Activated CD4-positive, alpha-beta memory T cell treated with anti-CD3 and anti-CD28 coated beads, Interleukin-2, amount 10 ng/mL, durations not matched to agents 7 days and 5 days (primary cell): ENCODE measurements at regions of chr12 and their contacts with region 1.

Region 1: DNA sequence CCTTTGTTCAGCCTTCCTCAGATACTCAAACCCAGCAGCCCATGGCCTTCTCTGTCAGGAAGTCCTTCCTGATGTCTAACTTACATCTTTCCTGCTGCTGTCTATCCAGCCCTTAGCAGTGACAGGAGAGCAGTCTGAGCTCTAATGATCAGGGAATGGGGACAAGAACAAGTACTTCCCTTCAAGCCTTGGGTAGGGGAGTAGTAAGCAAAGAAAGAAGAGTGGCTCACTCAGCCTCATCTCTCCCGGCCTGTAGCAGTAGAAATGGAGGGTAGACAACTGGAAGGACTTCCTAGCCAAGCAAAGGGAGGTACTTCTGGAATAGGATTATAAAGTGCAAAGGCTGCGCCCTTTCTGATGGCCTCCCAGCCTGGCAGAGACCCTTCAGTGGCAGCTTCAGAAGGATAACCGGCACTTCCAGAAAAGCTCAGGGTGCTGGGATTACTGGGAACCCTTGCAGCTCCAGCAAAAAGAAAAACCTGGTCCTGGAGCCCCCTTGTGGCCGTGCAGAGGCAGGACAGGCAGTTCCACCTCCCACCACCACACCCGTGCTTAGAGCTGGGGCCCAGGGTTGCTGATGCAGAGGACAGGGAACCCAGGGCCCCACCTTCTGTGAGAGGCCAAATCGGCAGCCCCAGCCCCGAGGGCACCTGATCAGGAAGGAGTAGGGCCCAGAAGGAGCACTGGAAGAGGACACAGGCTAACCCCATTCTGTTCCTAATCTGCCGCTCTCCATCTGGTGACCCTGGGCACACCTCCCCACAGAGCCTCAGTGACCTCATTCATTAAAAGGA is 12.4 kb upstream of the SMUG1 start:
- DNase-seq: peak; percentile 69
- H3K4me3 Mint-ChIP-seq: no peak overlapping the region
- H3K27ac Mint-ChIP-seq: no peak overlapping the region
- H3K4me1 Mint-ChIP-seq: peaks cover 4% of the 10 kb centered on the region
- H3K27me3 Mint-ChIP-seq: peaks cover 55% of the 10 kb centered on the region

Region 2: GRCh38 chr12:53984901-53985709 is 216.1 kb before region 1 on chr12 and contains the start of gene HOXC10:
- CTCF ChIA-PET with region 1: interaction called, 14 read pairs
- POLR2A ChIA-PET with region 1: no interaction called
- DNase-seq: peak; percentile 88
- H3K4me3 Mint-ChIP-seq: peak within 1 kb of the TSS; percentile 48
- H3K27ac Mint-ChIP-seq: peak within 1 kb of the TSS; percentile 47
- H3K4me1 Mint-ChIP-seq: peaks cover 31% of the 10 kb centered on the region
- H3K27me3 Mint-ChIP-seq: peaks cover 94% of the 10 kb centered on the region
- total RNA-seq, gene HOXC10: not detected

Region 3: DNA sequence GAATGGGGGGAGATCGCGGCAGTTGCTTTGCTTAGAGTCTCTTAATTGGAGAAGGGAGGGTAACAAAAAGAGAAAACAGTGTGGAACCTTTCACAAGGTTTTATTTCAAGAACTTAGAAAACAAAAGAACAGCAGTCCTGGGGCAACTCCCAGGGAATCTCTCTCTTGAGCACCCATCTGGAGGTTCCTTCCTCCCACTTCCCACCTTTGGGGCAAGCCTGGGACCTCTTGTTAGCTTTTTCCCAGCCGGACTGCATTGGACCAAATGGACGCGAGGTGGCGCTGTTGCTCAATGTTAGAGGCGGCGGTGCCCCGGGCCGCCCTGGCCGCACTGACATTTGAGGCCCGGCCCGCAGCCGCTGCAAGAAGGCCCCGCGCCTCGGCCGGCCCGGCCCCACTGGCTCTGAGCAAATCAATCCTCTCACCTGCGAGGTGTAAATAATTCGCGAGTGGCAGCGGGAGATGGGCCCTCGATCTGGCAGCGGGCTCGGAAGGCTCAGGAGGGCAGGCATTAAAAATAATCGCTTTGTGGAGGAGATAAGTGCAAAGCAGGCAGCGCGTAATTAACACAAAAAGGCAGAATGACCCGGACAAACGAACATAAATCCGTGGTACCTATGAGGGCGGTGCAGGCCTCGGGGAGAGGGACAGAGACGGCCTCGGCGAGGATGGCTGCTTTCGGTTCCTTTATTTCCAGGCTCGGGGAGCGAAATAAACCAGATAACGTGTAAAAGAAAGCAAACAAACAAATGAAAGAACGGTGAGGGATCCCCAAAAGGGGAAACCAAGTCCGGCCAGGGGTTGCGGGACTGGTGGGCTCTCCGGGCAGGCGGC is 195.1 kb before region 1 on chr12:
- CTCF ChIA-PET with region 1: interaction called, 74 read pairs
- POLR2A ChIA-PET with region 1: interaction called, 3 read pairs
- DNase-seq: peak; percentile 85
- H3K4me3 Mint-ChIP-seq: peak overlapping the region; percentile 66
- H3K27ac Mint-ChIP-seq: no peak overlapping the region
- H3K4me1 Mint-ChIP-seq: peaks cover 25% of the 10 kb centered on the region
- H3K27me3 Mint-ChIP-seq: peaks cover 95% of the 10 kb centered on the region

Region 4: DNA sequence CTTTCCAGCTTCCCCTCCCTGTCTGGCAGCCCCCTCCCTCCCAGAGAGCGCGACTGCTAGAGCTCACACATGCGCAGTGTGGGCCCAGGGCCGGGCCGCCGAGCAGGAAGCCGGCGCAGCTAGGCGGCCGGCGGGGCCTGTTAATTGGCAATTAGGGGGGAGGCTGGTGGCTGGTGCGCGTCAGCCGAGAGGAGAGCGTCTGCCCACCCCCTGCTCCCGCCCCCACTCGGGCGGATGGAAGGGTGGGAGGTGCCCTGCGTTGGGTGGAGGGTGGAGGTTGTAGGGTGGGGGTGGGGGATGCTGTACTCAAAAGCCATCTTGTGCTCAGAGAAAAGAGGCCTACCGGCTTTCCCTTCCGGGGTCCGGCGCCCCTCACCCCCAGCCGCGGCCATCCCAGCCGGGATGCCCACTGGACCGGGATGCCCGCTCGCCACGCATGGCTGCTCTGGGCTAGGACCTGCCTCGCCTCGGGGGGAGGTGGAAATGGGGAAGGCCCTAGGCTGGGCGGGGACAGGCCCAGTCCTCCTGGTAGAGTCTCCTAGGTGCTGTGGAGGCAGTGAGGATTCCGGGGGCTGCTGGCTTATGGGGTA is 183.2 kb before region 1 on chr12:
- CTCF ChIA-PET with region 1: interaction called, 12 read pairs
- POLR2A ChIA-PET with region 1: no interaction called
- DNase-seq: peak; percentile 74
- H3K4me3 Mint-ChIP-seq: peak overlapping the region; percentile 73
- H3K27ac Mint-ChIP-seq: no peak overlapping the region
- H3K4me1 Mint-ChIP-seq: peaks cover 23% of the 10 kb centered on the region
- H3K27me3 Mint-ChIP-seq: peaks cover 71% of the 10 kb centered on the region

Region 5: DNA sequence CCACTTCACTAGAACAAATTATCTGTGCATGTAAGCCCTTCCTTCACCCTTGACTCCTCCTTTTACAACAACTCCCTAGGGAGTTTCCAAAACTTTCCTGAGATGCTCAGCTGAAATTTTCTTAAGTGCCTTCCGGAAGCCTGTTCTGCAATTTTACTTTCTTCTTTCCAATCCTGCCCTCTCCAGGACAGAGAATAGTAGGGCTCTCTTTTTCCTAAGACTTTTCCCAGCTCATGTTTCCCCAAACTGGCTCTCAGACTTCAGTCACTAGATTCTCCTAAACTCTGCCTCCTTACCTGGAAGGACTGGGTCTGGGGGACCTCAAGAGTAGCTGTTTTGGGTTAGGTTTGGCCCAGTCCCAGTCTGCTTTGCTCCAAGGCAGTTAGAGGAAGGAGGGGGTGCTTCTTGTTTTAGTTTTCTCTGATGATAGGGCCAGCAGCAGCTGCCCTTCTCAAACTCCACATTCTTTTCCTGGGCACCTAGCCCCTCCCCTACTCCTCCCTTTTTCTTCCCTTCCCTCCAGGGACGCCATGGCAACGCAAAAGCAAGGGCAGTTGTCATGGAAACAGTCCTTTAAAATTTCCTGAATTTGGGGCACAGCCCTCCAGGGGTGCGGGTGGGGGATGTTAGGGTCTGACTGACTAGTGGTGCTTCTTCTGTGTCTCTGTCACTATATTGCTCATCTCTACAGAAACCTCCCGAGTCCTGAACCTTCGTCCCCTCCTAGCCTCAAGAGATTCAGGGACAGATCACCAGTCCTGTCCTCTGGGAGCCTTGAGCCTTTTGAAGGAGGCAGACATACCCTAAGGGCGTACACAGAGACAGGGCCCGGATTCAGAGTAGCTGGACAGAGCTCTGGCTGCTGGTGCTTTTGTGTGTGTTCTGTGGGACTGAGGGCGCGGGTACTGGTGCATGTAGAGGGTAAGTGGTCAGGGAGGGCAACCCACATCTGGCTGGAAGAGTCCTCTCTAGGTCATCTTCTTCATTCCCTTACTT is 370.3 kb after region 1 on chr12:
- CTCF ChIA-PET with region 1: no interaction called
- POLR2A ChIA-PET with region 1: no interaction called
- DNase-seq: no peak
- H3K4me3 Mint-ChIP-seq: no peak overlapping the region
- H3K27ac Mint-ChIP-seq: no peak overlapping the region
- H3K4me1 Mint-ChIP-seq: no peaks in the 10 kb centered on the region
- H3K27me3 Mint-ChIP-seq: no peaks in the 10 kb centered on the region

Region 6: DNA sequence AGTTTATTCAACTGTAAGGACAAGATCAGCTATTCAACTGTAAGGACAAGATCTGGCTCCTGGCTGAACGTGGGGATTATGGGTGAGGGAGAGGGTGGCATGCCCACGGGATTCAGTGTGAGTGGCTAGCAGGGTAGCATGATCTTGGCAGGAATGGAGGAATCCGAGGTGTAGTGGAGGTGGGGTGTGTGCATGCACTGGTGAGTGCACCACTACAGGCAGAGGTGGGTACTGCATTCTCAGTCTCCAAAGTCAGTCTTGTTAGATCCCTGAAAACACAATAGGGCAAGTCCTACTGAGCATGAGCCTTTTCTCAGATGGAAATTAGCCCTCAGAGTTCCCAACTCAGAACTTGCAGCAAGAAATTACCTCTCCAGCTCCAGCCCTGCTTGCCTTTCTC is 479.2 kb after region 1 on chr12:
- CTCF ChIA-PET with region 1: no interaction called
- POLR2A ChIA-PET with region 1: no interaction called
- DNase-seq: peak; percentile 32
- H3K4me3 Mint-ChIP-seq: no peak overlapping the region
- H3K27ac Mint-ChIP-seq: no peak overlapping the region
- H3K4me1 Mint-ChIP-seq: no peaks in the 10 kb centered on the region
- H3K27me3 Mint-ChIP-seq: peaks cover 51% of the 10 kb centered on the region